B cell (primary cell): ENCODE measurements at regions of chr1 and their contacts with region 1.

Region 1: GRCh38 chr1:53837924-53838652 is at the start of gene NDC1:
- DNase-seq: peak; percentile 96
- ATAC-seq: peak; percentile 90
- H3K4me3 ChIP-seq: peak within 1 kb of the TSS; percentile 66 to 95 (median 90)
- H3K4me3 Mint-ChIP-seq: peak within 1 kb of the TSS; percentile 100
- H3K27ac ChIP-seq: peak within 1 kb of the TSS; percentile 91 to 95
- H3K27ac Mint-ChIP-seq: peak within 1 kb of the TSS; percentile 99
- H3K4me1 ChIP-seq: peaks cover 11 to 14% of the 10 kb centered on the region in 2 donors
- H3K4me1 Mint-ChIP-seq: peaks cover 35% of the 10 kb centered on the region
- H3K27me3 ChIP-seq: no peaks in the 10 kb centered on the region
- H3K27me3 Mint-ChIP-seq: no peaks in the 10 kb centered on the region
- CTCF ChIP-seq: no peak
- total RNA-seq, gene NDC1: 12.0 and 15.7 TPM in 2 replicates

Region 2: DNA sequence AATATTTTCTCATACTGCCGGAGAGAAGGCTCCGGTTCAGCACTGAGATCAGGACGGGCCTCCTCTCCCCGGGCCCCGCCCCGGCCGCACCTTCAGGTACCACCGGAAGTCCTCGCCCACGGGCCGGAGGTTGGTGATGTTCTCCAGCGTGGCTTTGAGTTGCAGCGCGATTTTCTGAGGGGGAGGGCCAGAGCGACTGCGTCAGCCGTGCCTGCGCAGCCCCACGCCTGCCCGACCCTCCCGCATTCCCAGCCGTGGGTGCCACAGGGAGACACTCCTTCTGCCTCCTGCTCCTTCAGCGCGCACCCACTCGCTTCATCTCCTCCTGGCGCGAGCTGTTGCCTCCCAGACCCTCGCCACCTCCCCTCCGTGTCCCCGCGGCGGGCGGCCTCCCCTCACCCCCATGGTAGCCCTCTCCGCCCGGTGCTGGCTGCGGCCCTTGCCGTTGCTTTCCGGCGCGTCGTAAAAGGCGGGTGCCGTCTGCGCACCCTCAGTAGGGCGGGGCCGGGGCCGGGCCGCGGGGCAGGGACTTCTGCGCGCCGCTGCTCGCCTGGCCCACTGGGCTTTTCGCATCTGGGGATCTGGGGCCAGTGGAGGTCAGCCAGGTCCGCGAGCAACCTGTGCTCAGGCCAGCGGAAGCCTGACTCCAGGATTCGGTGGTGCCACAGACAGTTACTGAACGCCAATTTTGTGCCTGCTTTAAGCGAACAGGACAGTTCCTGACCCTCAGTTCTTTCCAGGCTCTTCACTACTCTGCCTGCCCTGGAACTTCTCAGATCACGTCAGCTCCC is 617.7 kb before region 1 on chr1 and contains the start of gene CZIB:
- CTCF ChIA-PET with region 1: no interaction called
- POLR2A ChIA-PET with region 1: no interaction called
- intact Hi-C with region 1: loop called (anchors 5 kb)
- DNase-seq: peak; percentile 96
- ATAC-seq: peak; percentile 92
- H3K4me3 ChIP-seq: peak within 1 kb of the TSS; percentile 43 to 91 (median 66)
- H3K4me3 Mint-ChIP-seq: peak within 1 kb of the TSS; percentile 97
- H3K27ac ChIP-seq: peak within 1 kb of the TSS; percentile 85 to 87
- H3K27ac Mint-ChIP-seq: peak within 1 kb of the TSS; percentile 99
- H3K4me1 ChIP-seq: peaks cover 13 to 17% of the 10 kb centered on the region in 2 donors
- H3K4me1 Mint-ChIP-seq: peaks cover 20% of the 10 kb centered on the region
- H3K27me3 ChIP-seq: no peaks in the 10 kb centered on the region
- H3K27me3 Mint-ChIP-seq: no peaks in the 10 kb centered on the region
- CTCF ChIP-seq: no peak
- total RNA-seq, gene CZIB: 62.0 and 62.1 TPM in 2 replicates

Region 3: DNA sequence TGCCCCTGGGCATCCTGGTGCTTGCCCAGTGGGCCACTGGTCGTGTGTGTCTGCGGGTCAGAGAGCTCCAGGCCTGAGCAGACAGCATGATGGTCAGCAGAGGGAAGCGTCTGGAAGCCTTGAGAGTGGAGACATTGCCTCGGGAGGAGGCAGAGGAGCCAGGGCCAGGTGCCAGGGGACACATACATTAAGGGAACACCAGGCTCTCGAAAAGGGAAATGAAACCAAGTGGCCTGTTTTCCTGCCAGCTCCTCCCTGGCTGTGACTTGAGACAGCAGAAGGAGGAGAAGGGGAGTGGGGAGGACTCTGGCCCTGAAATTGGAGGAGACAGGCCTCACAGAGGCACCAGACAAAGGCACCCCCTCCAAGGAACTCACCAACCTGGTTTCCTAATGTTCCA is 447.8 kb before region 1 on chr1:
- CTCF ChIA-PET with region 1: no interaction called
- POLR2A ChIA-PET with region 1: no interaction called
- intact Hi-C with region 1: no loop called
- DNase-seq: peak; percentile 59
- ATAC-seq: peak; percentile 36
- H3K4me3 ChIP-seq: no peak overlapping the region
- H3K4me3 Mint-ChIP-seq: no peak overlapping the region
- H3K27ac ChIP-seq: no peak overlapping the region
- H3K27ac Mint-ChIP-seq: no peak overlapping the region
- H3K4me1 ChIP-seq: peaks cover 9 to 13% of the 10 kb centered on the region in 2 donors
- H3K4me1 Mint-ChIP-seq: peaks cover 16% of the 10 kb centered on the region
- H3K27me3 ChIP-seq: no peaks in the 10 kb centered on the region
- H3K27me3 Mint-ChIP-seq: peaks cover 4% of the 10 kb centered on the region
- CTCF ChIP-seq: no peak

Region 4: GRCh38 chr1:53878492-53879105 is 40.5 kb after region 1 on chr1:
- CTCF ChIA-PET with region 1: no interaction called
- POLR2A ChIA-PET with region 1: no interaction called
- intact Hi-C with region 1: no loop called
- DNase-seq: peak; percentile 44
- ATAC-seq: no peak
- H3K4me3 ChIP-seq: no peak overlapping the region
- H3K4me3 Mint-ChIP-seq: no peak overlapping the region
- H3K27ac ChIP-seq: no peak overlapping the region
- H3K27ac Mint-ChIP-seq: no peak overlapping the region
- H3K4me1 ChIP-seq: no peaks in the 10 kb centered on the region
- H3K4me1 Mint-ChIP-seq: no peaks in the 10 kb centered on the region
- H3K27me3 ChIP-seq: no peaks in the 10 kb centered on the region
- H3K27me3 Mint-ChIP-seq: no peaks in the 10 kb centered on the region
- CTCF ChIP-seq: peak; percentile 63

Region 5: GRCh38 chr1:54052934-54053744 is 215.1 kb after region 1 on chr1 and contains the starts of genes TCEANC2 and TMEM59:
- CTCF ChIA-PET with region 1: no interaction called
- POLR2A ChIA-PET with region 1: no interaction called
- intact Hi-C with region 1: loop called (anchors 1 kb)
- DNase-seq: peak; percentile 99
- ATAC-seq: peak; percentile 91
- H3K4me3 ChIP-seq: peak within 1 kb of the TSS; percentile 65 to 99 (median 93)
- H3K4me3 Mint-ChIP-seq: no peak within 1 kb of the TSS
- H3K27ac ChIP-seq: peak within 1 kb of the TSS; percentile 75 to 94
- H3K27ac Mint-ChIP-seq: peak within 1 kb of the TSS; percentile 60
- H3K4me1 ChIP-seq: peaks cover 36% of the 10 kb centered on the region in 2 donors
- H3K4me1 Mint-ChIP-seq: peaks cover 36% of the 10 kb centered on the region
- H3K27me3 ChIP-seq: no peaks in the 10 kb centered on the region
- H3K27me3 Mint-ChIP-seq: no peaks in the 10 kb centered on the region
- CTCF ChIP-seq: no peak
- total RNA-seq, gene TCEANC2: 13.5 and 15.9 TPM in 2 replicates
- total RNA-seq, gene TMEM59: 146 and 152 TPM in 2 replicates

Region 6: DNA sequence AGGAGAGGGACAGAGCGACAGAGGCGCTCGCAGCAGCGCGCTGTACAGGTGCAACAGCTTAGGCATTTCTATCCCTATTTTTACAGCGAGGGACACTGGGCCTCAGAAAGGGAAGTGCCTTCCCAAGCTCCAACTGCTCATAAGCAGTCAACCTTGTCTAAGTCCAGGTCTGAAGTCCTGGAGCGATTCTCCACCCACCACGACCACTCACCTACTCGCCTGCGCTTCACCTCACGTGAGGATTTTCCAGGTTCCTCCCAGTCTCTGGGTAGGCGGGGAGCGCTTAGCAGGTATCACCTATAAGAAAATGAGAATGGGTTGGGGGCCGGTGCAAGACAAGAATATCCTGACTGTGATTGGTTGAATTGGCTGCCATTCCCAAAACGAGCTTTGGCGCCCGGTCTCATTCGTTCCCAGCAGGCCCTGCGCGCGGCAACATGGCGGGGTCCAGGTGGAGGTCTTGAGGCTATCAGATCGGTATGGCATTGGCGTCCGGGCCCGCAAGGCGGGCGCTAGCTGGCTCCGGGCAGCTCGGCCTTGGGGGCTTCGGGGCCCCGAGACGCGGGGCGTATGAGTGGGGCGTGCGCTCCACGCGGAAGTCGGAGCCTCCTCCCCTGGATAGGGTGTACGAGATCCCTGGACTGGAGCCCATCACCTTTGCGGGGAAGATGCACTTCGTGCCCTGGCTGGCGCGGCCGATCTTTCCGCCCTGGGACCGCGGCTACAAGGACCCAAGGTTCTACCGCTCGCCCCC is 361.9 kb after region 1 on chr1 and contains the starts of genes CYB5RL and MRPL37:
- CTCF ChIA-PET with region 1: no interaction called
- POLR2A ChIA-PET with region 1: interaction called, 7 read pairs
- intact Hi-C with region 1: loop called (anchors 1 kb)
- DNase-seq: peak; percentile 94
- ATAC-seq: peak; percentile 99
- H3K4me3 ChIP-seq: peak within 1 kb of the TSS; percentile 75 to 98 (median 88)
- H3K4me3 Mint-ChIP-seq: peak within 1 kb of the TSS; percentile 97
- H3K27ac ChIP-seq: peak within 1 kb of the TSS; percentile 60 to 77
- H3K27ac Mint-ChIP-seq: peak within 1 kb of the TSS; percentile 88
- H3K4me1 ChIP-seq: peaks cover 18 to 21% of the 10 kb centered on the region in 2 donors
- H3K4me1 Mint-ChIP-seq: peaks cover 34% of the 10 kb centered on the region
- H3K27me3 ChIP-seq: no peaks in the 10 kb centered on the region
- H3K27me3 Mint-ChIP-seq: no peaks in the 10 kb centered on the region
- CTCF ChIP-seq: no peak
- total RNA-seq, gene CYB5RL: 12.4 and 13.2 TPM in 2 replicates
- total RNA-seq, gene MRPL37: 37.0 and 39.9 TPM in 2 replicates

Region 7: DNA sequence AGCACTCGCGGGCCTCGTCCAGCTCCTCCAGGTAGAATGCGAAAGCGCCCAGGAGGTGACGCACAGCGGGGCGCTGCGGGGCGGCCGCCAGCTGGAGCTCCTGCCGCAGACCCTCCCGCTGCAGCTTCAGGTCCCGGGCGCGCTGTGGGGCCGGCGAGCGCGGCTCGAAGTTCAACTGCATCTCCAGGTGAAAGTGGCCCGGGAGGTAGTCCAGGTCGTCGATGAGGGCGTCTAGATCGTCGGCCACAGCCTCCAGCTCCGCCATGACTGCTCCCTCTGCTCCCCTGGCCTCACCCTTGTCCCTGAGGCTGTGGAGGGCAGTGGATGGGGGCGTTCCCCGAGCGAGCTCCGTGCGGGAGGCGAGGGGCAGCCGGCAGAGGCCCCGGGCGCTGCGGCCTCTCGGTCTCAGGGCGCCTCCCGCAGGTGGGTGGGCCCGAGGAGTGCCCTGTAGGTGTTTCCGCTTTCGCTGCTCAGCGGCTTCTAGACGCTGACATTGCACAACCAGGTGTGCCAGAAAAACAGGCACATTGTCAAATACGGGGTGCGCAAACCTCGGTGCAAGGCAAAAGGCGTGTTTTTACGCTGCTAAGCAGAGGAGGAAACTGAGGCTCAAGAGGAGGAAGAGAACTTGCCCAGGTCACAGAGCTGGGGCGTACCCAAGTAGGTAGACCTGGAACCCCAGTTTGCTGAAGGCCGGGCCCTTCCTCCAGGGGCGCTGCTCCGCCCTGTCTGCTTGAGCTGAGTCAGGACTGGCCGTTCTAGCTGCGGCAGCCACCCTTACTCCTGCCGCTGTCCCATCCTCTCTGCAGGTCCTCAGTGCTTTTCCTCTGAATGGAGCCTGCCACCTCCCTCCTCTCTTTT is 963.0 kb after region 1 on chr1 and contains the start of gene TTC22:
- CTCF ChIA-PET with region 1: no interaction called
- POLR2A ChIA-PET with region 1: no interaction called
- intact Hi-C with region 1: loop called (anchors 1 kb)
- DNase-seq: peak; percentile 81
- ATAC-seq: peak; percentile 92
- H3K4me3 ChIP-seq: peak within 1 kb of the TSS; percentile 50 to 82 (median 75)
- H3K4me3 Mint-ChIP-seq: peak within 1 kb of the TSS; percentile 99
- H3K27ac ChIP-seq: peak within 1 kb of the TSS in 1 of 2 donors; percentile 55
- H3K27ac Mint-ChIP-seq: peak within 1 kb of the TSS; percentile 93
- H3K4me1 ChIP-seq: peaks cover 25 to 31% of the 10 kb centered on the region in 2 donors
- H3K4me1 Mint-ChIP-seq: peaks cover 32% of the 10 kb centered on the region
- H3K27me3 ChIP-seq: no peaks in the 10 kb centered on the region
- H3K27me3 Mint-ChIP-seq: no peaks in the 10 kb centered on the region
- CTCF ChIP-seq: peak; percentile 81
- total RNA-seq, gene TTC22: 10.4 and 10.9 TPM in 2 replicates

Region 8: DNA sequence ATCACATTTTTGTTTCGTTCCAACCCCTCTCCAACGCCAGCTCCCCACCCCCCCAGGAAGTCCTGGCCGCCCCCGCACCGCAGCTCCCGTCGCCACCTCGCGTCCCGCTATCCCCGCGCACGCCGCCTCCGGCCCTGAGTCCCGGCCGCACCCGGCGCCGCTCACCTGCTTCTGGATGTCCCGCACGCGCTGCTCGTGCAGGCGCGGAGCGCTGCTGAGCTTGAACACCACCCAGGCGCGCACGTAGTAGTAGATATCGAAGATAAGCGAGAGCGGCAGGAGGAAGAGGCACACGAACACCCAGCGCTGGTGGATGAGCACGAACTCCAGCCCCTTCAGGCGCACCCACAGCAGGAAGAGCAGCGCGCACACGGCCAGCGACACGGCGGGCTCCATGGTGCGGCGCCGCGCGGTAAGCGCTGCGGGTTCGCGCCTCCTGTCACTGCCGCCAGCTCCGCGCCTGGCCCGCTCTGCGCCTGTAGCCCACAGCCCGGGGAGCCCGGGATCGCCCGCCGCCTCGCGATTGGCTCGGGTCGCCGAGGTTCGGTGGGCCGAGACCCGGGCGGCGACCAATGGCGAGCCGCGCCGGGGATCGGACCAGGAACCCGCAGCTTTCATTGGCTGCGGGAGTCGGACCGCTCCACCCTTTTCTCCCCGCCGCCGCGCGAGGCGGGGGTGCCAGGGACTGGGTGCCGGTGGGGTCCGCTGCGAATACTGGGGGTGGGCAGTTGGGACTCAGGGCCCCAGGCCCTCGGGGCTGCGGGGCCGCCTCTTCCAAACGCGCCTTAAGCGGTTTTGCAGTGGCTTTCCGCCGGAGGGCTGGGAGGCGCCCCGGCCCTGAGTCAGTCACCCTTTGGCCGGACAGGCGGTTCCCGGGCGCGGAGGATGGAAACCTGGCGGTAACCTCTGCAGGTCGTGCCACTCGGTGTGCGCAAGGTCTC is 1048.9 kb after region 1 on chr1 and contains the start of gene DHCR24:
- CTCF ChIA-PET with region 1: no interaction called
- POLR2A ChIA-PET with region 1: no interaction called
- intact Hi-C with region 1: loop called (anchors 5 kb)
- DNase-seq: peak; percentile 78
- ATAC-seq: peak; percentile 95
- H3K4me3 ChIP-seq: peak within 1 kb of the TSS in 4 of 5 experiments; percentile 54 to 79 (median 76)
- H3K4me3 Mint-ChIP-seq: peak within 1 kb of the TSS; percentile 96
- H3K27ac ChIP-seq: no peak within 1 kb of the TSS
- H3K27ac Mint-ChIP-seq: peak within 1 kb of the TSS; percentile 83
- H3K4me1 ChIP-seq: peaks cover 11 to 17% of the 10 kb centered on the region in 2 donors
- H3K4me1 Mint-ChIP-seq: peaks cover 30% of the 10 kb centered on the region
- H3K27me3 ChIP-seq: peaks cover 0 to 18% (median 1%) of the 10 kb centered on the region in 4 experiments
- H3K27me3 Mint-ChIP-seq: peaks cover 23% of the 10 kb centered on the region
- CTCF ChIP-seq: no peak
- total RNA-seq, gene DHCR24: 10.5 and 13.3 TPM in 2 replicates